ENCODE measurements at regions of chr1 and their contacts with region 1.

Region 1: GRCh38 chr1:154479764-154480421 is 22.1 kb upstream of the TDRD10 start:
- DNase-seq: peak in 4 of 5 donors; percentile 62 to 77 (median 66)
- H3K4me3 ChIP-seq: no peak overlapping the region
- H3K4me3 Mint-ChIP-seq: no peak overlapping the region
- H3K27ac ChIP-seq: no peak overlapping the region
- H3K27ac Mint-ChIP-seq: peak overlapping the region in 1 of 7 donors; percentile 9
- H3K4me1 ChIP-seq: peaks cover 16% of the 10 kb centered on the region
- H3K4me1 Mint-ChIP-seq: peaks cover 8 to 17% (median 12%) of the 10 kb centered on the region in 4 donors
- H3K27me3 ChIP-seq: no peaks in the 10 kb centered on the region
- H3K27me3 Mint-ChIP-seq: peaks cover 0 to 2% of the 10 kb centered on the region in 2 donors

Region 2: DNA sequence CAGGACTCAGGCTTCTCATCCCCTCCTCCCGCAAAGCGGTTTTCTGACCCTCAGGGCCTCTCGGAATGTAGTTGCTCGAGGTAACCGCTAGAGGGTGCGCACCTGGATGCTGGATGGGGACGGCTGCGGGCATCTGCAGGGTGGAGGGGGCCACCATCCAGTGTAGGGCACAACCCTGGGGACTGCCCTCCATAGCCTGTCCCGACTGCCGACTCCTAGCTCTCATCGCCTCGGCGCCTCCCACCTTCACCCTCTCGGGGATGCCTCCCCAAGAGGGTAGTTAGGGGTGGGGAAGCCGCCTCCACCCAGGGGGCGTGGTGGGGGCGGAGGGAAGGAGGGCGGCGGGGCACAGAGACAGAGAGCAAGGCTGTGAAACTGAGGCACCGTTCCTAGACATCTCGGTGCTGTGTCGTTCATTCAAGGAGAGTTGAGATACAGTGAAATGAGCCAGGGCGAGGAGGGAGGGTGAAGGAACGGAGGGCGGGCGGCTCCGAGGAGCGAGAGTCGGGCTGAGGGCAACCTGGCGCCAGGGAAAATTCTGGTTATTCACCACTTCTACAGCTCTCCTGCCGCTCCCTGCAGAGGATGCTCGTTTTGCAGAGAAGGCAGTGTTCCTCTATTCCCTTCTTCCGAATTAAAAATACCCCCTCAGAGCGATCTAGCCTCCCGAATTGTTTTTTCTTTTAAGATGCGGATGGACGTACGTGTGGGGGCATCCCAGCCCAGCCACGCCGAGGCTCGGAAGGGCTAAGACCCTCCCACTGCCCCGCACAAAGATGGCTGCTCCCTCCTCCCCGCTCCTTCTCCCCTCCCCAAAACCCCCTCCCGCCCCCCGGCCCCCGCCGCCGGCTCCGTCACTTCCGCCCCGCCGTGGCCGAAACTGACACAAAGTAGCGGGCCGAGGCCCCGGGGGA is 155.0 kb before region 1 on chr1 and contains the start of gene ATP8B2:
- CTCF ChIA-PET with region 1: interaction called, 3 read pairs
- POLR2A ChIA-PET with region 1: interaction called, 3 read pairs
- intact Hi-C with region 1: loop called (anchors 2 kb)
- DNase-seq: peak; percentile 79 to 85 (median 81)
- H3K4me3 ChIP-seq: peak within 1 kb of the TSS; percentile 61 to 66
- H3K4me3 Mint-ChIP-seq: peak within 1 kb of the TSS; percentile 93 to 99 (median 98)
- H3K27ac ChIP-seq: peak within 1 kb of the TSS; percentile 89
- H3K27ac Mint-ChIP-seq: peak within 1 kb of the TSS; percentile 86 to 98 (median 96)
- H3K4me1 ChIP-seq: peaks cover 41% of the 10 kb centered on the region
- H3K4me1 Mint-ChIP-seq: peaks cover 22 to 49% (median 32%) of the 10 kb centered on the region in 4 donors
- H3K27me3 ChIP-seq: no peaks in the 10 kb centered on the region
- H3K27me3 Mint-ChIP-seq: no peaks in the 10 kb centered on the region
- total RNA-seq, gene ATP8B2: 186 TPM

Region 3: DNA sequence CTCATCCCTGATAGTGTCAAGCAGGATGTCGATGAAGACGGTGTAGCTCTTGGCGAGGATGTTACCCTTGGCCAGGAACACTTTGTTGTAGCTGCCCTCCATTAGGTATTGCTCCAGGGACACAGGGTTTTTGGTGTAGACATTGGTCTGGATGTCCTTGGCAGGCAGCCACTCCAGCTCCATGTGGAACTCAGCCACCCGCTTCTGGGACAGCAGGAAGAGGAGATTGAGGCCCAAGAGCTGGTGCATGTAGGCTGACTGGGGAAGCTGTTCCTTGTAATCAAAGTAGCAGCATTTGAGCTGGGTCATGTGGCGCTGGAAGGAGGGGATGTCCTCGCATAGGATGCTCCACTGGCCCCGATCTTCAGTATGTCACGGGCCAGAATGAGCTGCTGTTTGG is 65.3 kb before region 1 on chr1:
- CTCF ChIA-PET with region 1: interaction called, 12 read pairs
- POLR2A ChIA-PET with region 1: no interaction called
- intact Hi-C with region 1: no loop called
- DNase-seq: no peak
- H3K4me3 ChIP-seq: no peak overlapping the region
- H3K4me3 Mint-ChIP-seq: peak overlapping the region in 6 of 8 donors; percentile 8 to 71 (median 20)
- H3K27ac ChIP-seq: peak overlapping the region; percentile 29
- H3K27ac Mint-ChIP-seq: peak overlapping the region in 6 of 7 donors; percentile 77 to 88 (median 86)
- H3K4me1 ChIP-seq: peaks cover 100% of the 10 kb centered on the region
- H3K4me1 Mint-ChIP-seq: peaks cover 45 to 100% (median 78%) of the 10 kb centered on the region in 4 donors
- H3K27me3 ChIP-seq: no peaks in the 10 kb centered on the region
- H3K27me3 Mint-ChIP-seq: no peaks in the 10 kb centered on the region

Region 4: DNA sequence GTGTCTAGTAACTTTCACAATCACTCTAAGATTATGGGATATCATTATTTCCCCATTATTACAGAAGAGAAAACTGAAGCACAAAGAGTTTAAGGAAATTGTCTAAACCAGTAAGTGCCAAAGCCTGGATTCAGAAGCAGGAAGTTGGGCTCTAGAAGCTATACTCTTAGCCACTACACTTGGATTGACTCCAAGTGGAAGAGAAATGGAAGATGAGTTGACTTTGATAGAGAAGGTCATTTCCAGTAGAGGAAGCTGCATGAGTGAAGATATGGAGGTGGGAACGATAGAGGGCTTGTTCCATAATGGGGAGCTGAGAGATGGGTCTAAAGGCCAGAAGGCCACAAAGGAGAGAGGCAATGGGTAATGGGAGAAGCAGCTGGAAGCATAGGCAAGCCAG is 10.4 kb after region 1 on chr1:
- CTCF ChIA-PET with region 1: interaction called, 14 read pairs
- POLR2A ChIA-PET with region 1: no interaction called
- intact Hi-C with region 1: no loop called
- DNase-seq: no peak
- H3K4me3 ChIP-seq: no peak overlapping the region
- H3K4me3 Mint-ChIP-seq: no peak overlapping the region
- H3K27ac ChIP-seq: no peak overlapping the region
- H3K27ac Mint-ChIP-seq: peak overlapping the region in 2 of 7 donors; percentile 26 to 51
- H3K4me1 ChIP-seq: peaks cover 28% of the 10 kb centered on the region
- H3K4me1 Mint-ChIP-seq: peaks cover 19 to 32% (median 28%) of the 10 kb centered on the region in 4 donors
- H3K27me3 ChIP-seq: no peaks in the 10 kb centered on the region
- H3K27me3 Mint-ChIP-seq: no peaks in the 10 kb centered on the region

Region 5: GRCh38 chr1:154760469-154760933 is 280.6 kb after region 1 on chr1:
- CTCF ChIA-PET with region 1: interaction called, 24 read pairs
- POLR2A ChIA-PET with region 1: no interaction called
- intact Hi-C with region 1: loop called (anchors 1 kb)
- DNase-seq: peak; percentile 76 to 85 (median 79)
- H3K4me3 ChIP-seq: no peak overlapping the region
- H3K4me3 Mint-ChIP-seq: peak overlapping the region; percentile 50 to 75 (median 66)
- H3K27ac ChIP-seq: no peak overlapping the region
- H3K27ac Mint-ChIP-seq: no peak overlapping the region
- H3K4me1 ChIP-seq: peaks cover 16% of the 10 kb centered on the region
- H3K4me1 Mint-ChIP-seq: peaks cover 9 to 19% (median 15%) of the 10 kb centered on the region in 4 donors
- H3K27me3 ChIP-seq: no peaks in the 10 kb centered on the region
- H3K27me3 Mint-ChIP-seq: peaks cover 0 to 7% of the 10 kb centered on the region in 2 donors

Region 6: GRCh38 chr1:155063550-155064110 is 583.7 kb after region 1 on chr1 and contains the start of gene EFNA4:
- CTCF ChIA-PET with region 1: no interaction called
- POLR2A ChIA-PET with region 1: no interaction called
- intact Hi-C with region 1: loop called (anchors 1 kb)
- DNase-seq: peak; percentile 83 to 87 (median 86)
- H3K4me3 ChIP-seq: peak within 1 kb of the TSS; percentile 63 to 70
- H3K4me3 Mint-ChIP-seq: peak within 1 kb of the TSS; percentile 91 to 99 (median 94)
- H3K27ac ChIP-seq: peak within 1 kb of the TSS; percentile 51
- H3K27ac Mint-ChIP-seq: peak within 1 kb of the TSS; percentile 81 to 94 (median 85)
- H3K4me1 ChIP-seq: peaks cover 35% of the 10 kb centered on the region
- H3K4me1 Mint-ChIP-seq: peaks cover 23 to 52% (median 32%) of the 10 kb centered on the region in 4 donors
- H3K27me3 ChIP-seq: no peaks in the 10 kb centered on the region
- H3K27me3 Mint-ChIP-seq: no peaks in the 10 kb centered on the region
- total RNA-seq, gene EFNA4: 6.0 to 8.5 TPM